ENCODE measurements at regions of chr9 and their contacts with region 1.

Region 1: GRCh38 chr9:137070201-137070905 is at the start of gene SAPCD2:
- DNase-seq: peak; percentile 83
- ATAC-seq: peak; percentile 73
- H3K4me3 ChIP-seq: peak within 1 kb of the TSS; percentile 80 to 82
- H3K27ac ChIP-seq: peak within 1 kb of the TSS; percentile 64
- H3K4me1 ChIP-seq: peaks cover 24 to 42% of the 10 kb centered on the region in 2 experiments
- H3K27me3 ChIP-seq: no peaks in the 10 kb centered on the region
- CTCF ChIP-seq: no peak
- POLR2A ChIP-seq: peak; percentile 64
- RAD21 ChIP-seq: no peak
- total RNA-seq, gene SAPCD2: 71.7 TPM

Region 2: DNA sequence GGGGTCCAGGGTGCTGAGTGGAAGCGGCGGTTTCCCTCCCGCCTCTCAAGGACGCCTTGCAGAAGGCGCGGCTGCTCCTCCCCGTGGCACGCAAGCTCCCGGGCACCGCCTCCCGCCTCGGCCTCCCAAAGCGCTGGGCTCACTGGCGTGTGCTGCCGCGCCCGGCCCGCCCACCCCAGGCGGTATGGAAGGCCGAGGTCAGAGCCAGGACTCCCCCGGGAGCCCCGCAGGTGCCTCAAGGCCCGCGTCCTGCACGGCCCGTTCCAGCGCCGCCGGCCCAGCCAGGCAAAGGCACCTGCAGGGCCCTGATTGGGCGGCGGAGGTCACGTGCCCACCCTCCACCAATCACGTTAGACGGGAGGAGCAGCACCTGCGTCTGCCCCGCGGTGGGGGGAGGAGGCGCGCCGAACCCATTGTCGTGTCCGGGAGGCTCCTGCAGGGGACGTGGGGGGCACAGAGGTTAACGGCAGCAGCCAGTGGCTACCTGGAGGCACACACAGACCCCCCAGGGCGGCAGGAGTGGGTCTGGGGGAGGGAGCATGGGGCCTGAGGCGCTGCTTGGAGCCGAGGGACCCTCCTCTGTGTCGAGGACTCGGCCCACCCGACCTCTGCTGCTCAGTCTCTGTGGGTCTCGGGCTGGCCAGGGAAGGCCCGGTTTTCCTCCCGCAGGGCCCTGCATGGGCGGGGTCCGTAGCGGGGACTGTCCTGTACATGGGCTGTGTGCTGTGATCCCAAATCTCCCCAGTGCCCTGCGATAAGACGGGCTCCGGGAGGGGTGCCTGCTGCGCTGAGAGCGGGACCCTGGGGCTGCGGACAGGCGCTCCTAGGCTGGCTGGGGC is 120.3 kb before region 1 on chr9:
- CTCF ChIA-PET with region 1: interaction called, 10 read pairs
- POLR2A ChIA-PET with region 1: interaction called, 6 read pairs
- RAD21 ChIA-PET with region 1: no interaction called
- intact Hi-C with region 1: no loop called
- DNase-seq: peak; percentile 85
- ATAC-seq: peak; percentile 87
- H3K4me3 ChIP-seq: peak overlapping the region; percentile 65 to 67
- H3K27ac ChIP-seq: peak overlapping the region; percentile 94
- H3K4me1 ChIP-seq: peaks cover 22 to 43% of the 10 kb centered on the region in 2 experiments
- H3K27me3 ChIP-seq: no peaks in the 10 kb centered on the region
- CTCF ChIP-seq: peak in 2 of 3 experiments; percentile 12 to 22; a peak in 2 of 6 replicates
- POLR2A ChIP-seq: peak; percentile 60
- RAD21 ChIP-seq: no peak

Region 3: DNA sequence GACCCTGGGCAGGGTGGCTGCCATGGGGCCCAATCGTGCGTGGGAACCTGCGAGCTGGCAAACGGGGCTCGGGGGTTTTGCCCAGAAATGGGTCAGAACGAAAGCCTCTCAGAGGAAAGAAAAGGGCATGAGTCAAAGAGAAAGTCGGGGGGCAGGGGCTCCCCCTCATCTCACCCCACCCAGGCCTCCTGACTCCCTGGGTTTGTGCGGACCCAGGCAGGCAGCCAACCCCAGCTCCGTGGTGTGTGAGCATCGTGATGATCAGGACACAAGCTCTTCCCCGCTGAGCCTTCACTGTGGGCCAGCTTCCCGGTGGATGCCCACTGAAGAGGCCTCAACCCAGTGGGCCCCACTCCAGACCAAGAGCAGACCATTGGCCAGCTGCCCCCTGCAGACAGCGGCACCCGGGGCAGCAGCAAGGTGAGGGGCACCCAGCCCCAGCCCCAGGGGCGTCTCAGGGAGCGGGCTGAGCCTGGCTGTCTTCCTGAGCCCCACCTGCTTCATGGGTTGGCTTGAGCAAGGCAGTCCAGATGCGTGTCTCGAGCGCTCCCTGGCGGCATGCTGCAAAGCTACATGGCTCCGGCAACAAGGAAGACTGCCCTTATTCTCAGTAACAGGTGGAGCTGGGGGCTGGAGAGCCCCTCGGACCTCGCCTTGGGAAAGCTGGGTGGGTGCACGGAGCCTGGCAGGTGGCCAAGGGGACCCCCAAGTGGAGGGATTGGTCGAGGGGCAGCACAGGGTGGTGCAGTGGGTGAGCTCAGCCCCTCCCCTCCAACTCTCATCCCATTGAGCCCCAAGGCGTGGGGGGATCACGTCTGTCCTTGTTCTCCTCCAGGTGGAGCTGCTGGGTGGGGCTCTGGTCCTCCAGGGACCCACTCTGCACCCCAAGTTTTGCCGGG is 35.2 kb before region 1 on chr9:
- CTCF ChIA-PET with region 1: interaction called, 19 read pairs
- POLR2A ChIA-PET with region 1: no interaction called
- RAD21 ChIA-PET with region 1: interaction called in 1 of 2 experiments, 3 read pairs
- intact Hi-C with region 1: no loop called
- DNase-seq: peak; percentile 69
- ATAC-seq: peak; percentile 95
- H3K4me3 ChIP-seq: peak overlapping the region in 1 of 2 experiments; percentile 22; a peak in 1 of 4 replicates
- H3K27ac ChIP-seq: no peak overlapping the region; the same call in 1 of the 2 replicates
- H3K4me1 ChIP-seq: peaks cover 9 to 20% of the 10 kb centered on the region in 2 experiments; a peak in 3 of 4 replicates
- H3K27me3 ChIP-seq: no peaks in the 10 kb centered on the region
- CTCF ChIP-seq: peak in 2 of 3 experiments; percentile 85 to 96; a peak in 4 of 6 replicates
- POLR2A ChIP-seq: no peak
- RAD21 ChIP-seq: no peak

Region 4: GRCh38 chr9:137055385-137056364 is 14.7 kb before region 1 on chr9:
- CTCF ChIA-PET with region 1: interaction called, 14 read pairs
- POLR2A ChIA-PET with region 1: interaction called, 7 read pairs
- RAD21 ChIA-PET with region 1: no interaction called
- intact Hi-C with region 1: no loop called
- DNase-seq: no peak
- ATAC-seq: no peak
- H3K4me3 ChIP-seq: no peak overlapping the region
- H3K27ac ChIP-seq: peak overlapping the region; percentile 85; the same call in 1 of the 2 replicates
- H3K4me1 ChIP-seq: peaks cover 22 to 40% of the 10 kb centered on the region in 2 experiments
- H3K27me3 ChIP-seq: no peaks in the 10 kb centered on the region
- CTCF ChIP-seq: no peak
- POLR2A ChIP-seq: no peak
- RAD21 ChIP-seq: no peak

Region 5: GRCh38 chr9:137150617-137151457 is 80.5 kb after region 1 on chr9:
- CTCF ChIA-PET with region 1: interaction called, 5 read pairs
- POLR2A ChIA-PET with region 1: interaction called, 3 read pairs
- RAD21 ChIA-PET with region 1: interaction called in 1 of 2 experiments, 11 read pairs
- intact Hi-C with region 1: no loop called
- DNase-seq: peak; percentile 79
- ATAC-seq: peak; percentile 75
- H3K4me3 ChIP-seq: no peak overlapping the region
- H3K27ac ChIP-seq: peak overlapping the region; percentile 47; the same call in 1 of the 2 replicates
- H3K4me1 ChIP-seq: peaks cover 12 to 22% of the 10 kb centered on the region in 2 experiments
- H3K27me3 ChIP-seq: no peaks in the 10 kb centered on the region
- CTCF ChIP-seq: no peak
- POLR2A ChIP-seq: no peak
- RAD21 ChIP-seq: no peak

Region 6: GRCh38 chr9:137240861-137241489 is 170.6 kb after region 1 on chr9 and contains the start of gene TUBB4B:
- CTCF ChIA-PET with region 1: interaction called, 10 read pairs
- POLR2A ChIA-PET with region 1: interaction called, 8 read pairs
- RAD21 ChIA-PET with region 1: no interaction called
- intact Hi-C with region 1: no loop called
- DNase-seq: peak; percentile 100
- ATAC-seq: peak; percentile 75
- H3K4me3 ChIP-seq: peak within 1 kb of the TSS; percentile 85 to 96
- H3K27ac ChIP-seq: peak within 1 kb of the TSS; percentile 100
- H3K4me1 ChIP-seq: peaks cover 31 to 61% of the 10 kb centered on the region in 2 experiments
- H3K27me3 ChIP-seq: no peaks in the 10 kb centered on the region
- CTCF ChIP-seq: no peak
- POLR2A ChIP-seq: peak; percentile 98
- RAD21 ChIP-seq: no peak
- total RNA-seq, gene TUBB4B: 502 TPM